Tibial artery (tissue), 4 donors: ENCODE measurements at regions of chr1 and their contacts with region 1.

Region 1: DNA sequence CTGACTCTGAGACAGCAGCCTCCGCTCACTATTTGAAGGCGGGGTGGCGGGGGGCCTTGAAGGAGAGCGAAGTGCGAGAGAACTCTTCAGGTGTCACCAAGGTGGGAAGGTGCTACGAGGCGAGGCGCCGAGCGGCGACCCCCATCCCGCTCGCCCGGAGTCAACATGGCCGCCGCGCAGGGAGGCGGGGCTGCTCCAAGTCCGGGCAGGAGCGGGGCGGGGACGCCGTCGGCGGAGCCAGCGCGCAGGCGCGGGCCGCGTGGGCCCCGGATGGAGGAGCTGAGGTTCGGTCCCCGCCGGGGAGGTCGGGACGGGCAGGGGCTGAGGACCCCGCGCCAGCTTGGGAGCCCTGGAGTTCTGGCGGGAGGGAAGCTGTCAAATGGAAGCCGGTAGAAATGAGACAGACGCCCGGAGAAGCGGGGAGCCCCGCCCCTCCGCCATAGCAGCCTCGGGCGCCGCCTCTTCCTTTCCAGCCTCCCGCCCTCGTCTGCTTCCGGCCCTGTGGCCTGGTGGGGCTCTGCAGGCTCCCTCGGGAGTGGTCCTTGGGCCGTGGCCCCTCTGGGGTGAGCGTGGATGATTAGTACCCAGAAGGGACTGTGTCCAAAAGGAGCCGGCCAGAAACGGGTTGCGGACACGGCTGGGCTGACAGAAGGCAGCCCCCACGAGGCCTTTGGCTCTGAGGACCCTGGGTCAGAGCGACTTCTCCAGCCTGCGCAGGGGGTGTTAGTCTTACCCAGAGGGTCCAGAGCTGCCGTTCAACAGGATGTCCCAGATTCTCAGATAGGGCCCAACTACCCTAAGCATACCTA is at the start of gene PIGV:
- DNase-seq: peak; percentile 82 to 93
- H3K4me3 ChIP-seq: peak within 1 kb of the TSS; percentile 60 to 74
- H3K27ac ChIP-seq: peak within 1 kb of the TSS; percentile 98 to 100
- H3K4me1 ChIP-seq: peaks cover 5 to 57% (median 39%) of the 10 kb centered on the region in 4 donors
- H3K27me3 ChIP-seq: no peaks in the 10 kb centered on the region
- CTCF ChIP-seq: peak; percentile 30 to 47

Region 2: DNA sequence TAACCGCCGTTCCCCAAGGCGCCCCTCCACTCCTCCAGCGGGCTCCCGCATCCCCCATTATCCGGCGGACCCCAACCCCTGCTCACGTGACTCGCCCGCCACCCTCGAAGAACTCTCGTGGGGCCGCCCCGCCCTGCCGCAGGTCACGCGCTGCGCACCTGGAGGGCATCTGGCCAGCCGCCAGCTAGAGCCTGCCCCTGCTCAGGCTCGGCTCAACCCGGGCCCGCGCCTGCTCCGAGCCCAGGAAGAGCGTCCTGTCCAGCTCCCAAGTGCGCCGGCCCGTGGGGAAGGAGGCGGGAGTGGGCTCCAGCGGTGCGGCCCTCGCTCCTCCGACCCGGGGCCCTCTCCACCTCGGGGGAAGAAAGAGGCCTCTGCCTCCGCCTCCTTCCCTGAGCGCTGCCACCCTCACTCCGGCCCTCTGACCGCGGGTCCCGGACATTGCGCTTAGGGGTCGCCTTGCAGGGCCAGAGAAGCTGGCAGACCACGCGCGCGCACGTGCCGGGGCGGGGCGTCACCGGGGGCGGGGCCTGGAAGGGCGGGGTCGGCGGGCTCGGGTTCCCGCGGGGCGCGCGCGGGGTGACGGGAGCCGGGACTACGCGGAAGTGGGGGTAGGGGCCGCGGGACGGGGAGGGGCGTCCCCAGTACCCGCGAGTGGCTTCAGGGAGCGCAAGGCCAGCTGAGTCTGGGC is 287.3 kb before region 1 on chr1:
- intact Hi-C with region 1: loop called (anchors 2 kb)
- DNase-seq: peak in 1 of 2 donors; percentile 94
- H3K4me3 ChIP-seq: peak overlapping the region; percentile 62 to 98
- H3K27ac ChIP-seq: peak overlapping the region; percentile 83 to 92
- H3K4me1 ChIP-seq: peaks cover 0 to 16% (median 9%) of the 10 kb centered on the region in 4 donors
- H3K27me3 ChIP-seq: no peaks in the 10 kb centered on the region
- CTCF ChIP-seq: no peak

Region 3: DNA sequence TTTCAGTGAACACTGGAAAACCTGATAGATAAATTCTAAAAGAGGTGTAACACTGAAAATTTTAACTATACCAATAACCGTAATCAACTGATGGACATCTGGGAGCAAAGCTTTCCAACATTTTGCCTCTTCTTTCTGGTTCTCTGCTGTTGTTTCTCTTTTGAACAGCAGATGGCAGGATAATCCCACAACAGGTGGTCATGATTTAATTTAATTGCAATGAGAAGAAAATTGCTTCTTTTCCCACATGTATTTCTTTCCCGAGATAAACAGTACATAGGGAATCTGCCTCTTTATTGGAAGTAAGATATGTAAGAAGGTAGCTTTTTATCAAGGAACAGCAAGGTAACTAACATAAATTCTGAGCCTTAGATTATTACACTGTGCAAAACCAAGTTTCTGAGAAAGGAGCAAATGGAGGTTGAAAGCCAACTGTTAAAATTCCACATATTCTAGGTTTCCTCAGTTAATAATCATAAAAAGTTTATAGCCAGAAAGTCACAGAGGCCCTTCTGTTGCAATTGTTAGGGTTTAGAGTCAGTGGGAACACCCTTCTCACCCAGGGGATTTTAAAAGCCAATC is 185.4 kb before region 1 on chr1:
- intact Hi-C with region 1: loop called (anchors 1 kb)
- DNase-seq: peak in 1 of 2 donors; percentile 43
- H3K4me3 ChIP-seq: no peak overlapping the region
- H3K27ac ChIP-seq: no peak overlapping the region
- H3K4me1 ChIP-seq: no peaks in the 10 kb centered on the region
- H3K27me3 ChIP-seq: no peaks in the 10 kb centered on the region
- CTCF ChIP-seq: peak; percentile 91 to 98

Region 4: DNA sequence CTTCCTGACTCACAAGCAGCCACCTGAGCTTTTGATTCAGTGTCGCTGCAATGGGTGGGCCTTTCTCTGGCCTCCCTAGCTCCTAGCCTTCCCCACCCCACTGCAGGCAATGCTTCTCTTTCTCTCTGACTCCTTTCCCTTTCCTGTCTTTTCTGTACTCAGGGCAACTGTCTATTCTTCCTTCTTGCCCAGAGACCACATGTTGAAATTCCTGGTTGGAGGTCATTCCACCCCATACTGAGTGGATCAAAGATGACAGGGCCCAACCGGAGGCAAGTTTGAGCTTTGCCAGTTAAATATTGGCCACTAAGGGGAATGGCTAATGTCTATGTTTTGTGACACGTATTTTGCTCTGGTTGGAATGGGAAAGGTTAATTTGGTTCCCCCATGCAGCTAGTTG is 157.3 kb before region 1 on chr1:
- intact Hi-C with region 1: no loop called
- DNase-seq: no peak
- H3K4me3 ChIP-seq: no peak overlapping the region
- H3K27ac ChIP-seq: no peak overlapping the region
- H3K4me1 ChIP-seq: peaks cover 0 to 10% (median 0%) of the 10 kb centered on the region in 4 donors
- H3K27me3 ChIP-seq: no peaks in the 10 kb centered on the region
- CTCF ChIP-seq: no peak

Region 5: DNA sequence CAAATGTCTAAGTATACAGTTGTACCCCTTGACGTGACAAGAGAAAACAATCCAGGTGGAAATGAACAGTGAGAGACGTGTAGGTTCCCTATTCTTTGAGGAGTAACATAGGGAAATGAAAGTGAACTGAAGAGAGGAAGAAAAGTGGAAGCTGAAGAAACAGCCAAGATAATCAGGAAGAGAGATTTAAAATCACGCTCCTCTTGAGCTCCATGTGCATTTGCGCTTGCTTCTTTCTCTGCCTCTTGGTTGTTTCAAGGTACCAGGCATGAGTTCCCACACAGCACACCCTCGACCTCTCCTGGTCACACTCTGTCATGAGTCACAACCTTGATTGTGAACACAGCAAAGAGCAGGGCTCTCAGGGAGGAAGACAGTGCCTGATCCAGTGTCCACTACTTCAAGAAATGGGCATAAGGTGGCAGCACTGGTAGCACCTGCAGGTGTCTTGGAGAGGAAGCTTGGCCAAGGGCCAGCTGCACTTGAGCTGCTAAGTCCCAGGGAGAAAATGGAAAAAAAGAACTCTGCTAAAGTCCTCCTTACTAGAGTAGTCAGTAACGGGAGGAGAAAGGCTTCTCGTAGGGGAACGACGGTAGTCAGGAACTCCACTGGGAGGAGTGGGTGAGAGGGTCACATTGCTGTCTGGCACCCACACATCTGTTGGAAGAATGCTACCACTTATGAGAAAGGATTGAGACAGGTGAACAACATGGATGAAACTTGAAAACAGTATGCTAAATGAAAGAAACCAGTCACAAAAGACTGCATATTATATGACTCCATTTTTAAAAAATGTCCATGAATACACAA is 110.4 kb before region 1 on chr1:
- intact Hi-C with region 1: loop called (anchors 5 kb)
- DNase-seq: peak; percentile 73 to 86
- H3K4me3 ChIP-seq: peak overlapping the region in 1 of 2 donors; percentile 20
- H3K27ac ChIP-seq: peak overlapping the region; percentile 8 to 10
- H3K4me1 ChIP-seq: peaks cover 0 to 9% (median 2%) of the 10 kb centered on the region in 4 donors
- H3K27me3 ChIP-seq: no peaks in the 10 kb centered on the region
- CTCF ChIP-seq: peak; percentile 61 to 65

Region 6: GRCh38 chr1:26695356-26696118 is 92.4 kb before region 1 on chr1 and contains the start of gene ARID1A:
- intact Hi-C with region 1: loop called (anchors 2 kb)
- DNase-seq: peak; percentile 93 to 98
- H3K4me3 ChIP-seq: peak within 1 kb of the TSS; percentile 94 to 96
- H3K27ac ChIP-seq: peak within 1 kb of the TSS; percentile 96 to 97
- H3K4me1 ChIP-seq: peaks cover 3 to 50% (median 42%) of the 10 kb centered on the region in 4 donors
- H3K27me3 ChIP-seq: peaks cover 0 to 3% of the 10 kb centered on the region in 2 donors
- CTCF ChIP-seq: no peak

Region 7: DNA sequence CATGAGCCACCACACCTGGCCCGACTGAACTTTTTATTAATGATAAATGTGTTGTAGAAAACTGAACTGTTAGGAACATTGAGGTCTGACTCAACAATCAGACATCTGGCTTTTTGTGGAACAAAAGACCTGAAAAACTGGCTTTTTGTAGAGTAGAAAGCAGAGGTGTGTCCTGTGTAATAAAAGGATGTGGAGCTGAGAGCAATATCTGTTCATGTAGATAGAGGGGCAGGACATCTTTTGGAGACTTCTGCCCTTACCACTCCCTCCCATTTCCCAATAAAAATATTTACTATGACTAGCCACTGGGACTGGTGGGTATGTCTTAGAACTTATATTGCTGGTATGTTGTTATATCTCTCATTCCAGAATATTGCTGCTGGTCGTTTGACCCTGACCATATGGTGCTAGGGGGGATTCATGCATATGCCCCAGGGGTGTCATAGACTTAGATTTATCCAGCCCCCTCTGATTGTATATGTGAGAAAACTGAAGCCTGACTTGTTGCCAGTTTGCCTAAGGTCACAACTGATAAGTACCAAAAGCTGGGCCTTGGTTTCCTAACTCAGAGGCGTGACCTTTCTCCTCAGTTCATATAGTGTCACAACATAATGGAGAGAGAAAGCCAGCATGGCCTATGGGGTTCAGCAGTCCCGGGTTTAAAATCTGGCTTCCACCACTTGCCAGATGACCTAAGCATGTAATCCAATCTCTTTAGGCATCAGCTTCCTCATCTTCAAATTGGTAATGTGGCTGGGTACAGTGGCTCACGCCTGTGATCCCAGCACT is 33.6 kb before region 1 on chr1:
- intact Hi-C with region 1: no loop called
- DNase-seq: no peak
- H3K4me3 ChIP-seq: no peak overlapping the region
- H3K27ac ChIP-seq: peak overlapping the region in 1 of 2 donors; percentile 46
- H3K4me1 ChIP-seq: peaks cover 4 to 40% (median 24%) of the 10 kb centered on the region in 4 donors
- H3K27me3 ChIP-seq: no peaks in the 10 kb centered on the region
- CTCF ChIP-seq: no peak